Common myeloid progenitor, CD34-positive (primary cell): ENCODE measurements at regions of chr12 and their contacts with region 1.

Region 1: GRCh38 chr12:69254046-69254445 is 14.7 kb downstream of the CPSF6 start:
- DNase-seq: peak; percentile 67 to 84 (median 81)
- H3K4me3 ChIP-seq: no peak overlapping the region
- H3K27ac ChIP-seq: no peak overlapping the region
- H3K4me1 ChIP-seq: peaks cover 0 to 2% (median 0%) of the 10 kb centered on the region in 4 experiments
- H3K27me3 ChIP-seq: no peaks in the 10 kb centered on the region

Region 2: GRCh38 chr12:69243099-69244084 is 10.7 kb before region 1 on chr12:
- CTCF ChIA-PET with region 1: interaction called, 11 read pairs
- POLR2A ChIA-PET with region 1: no interaction called
- DNase-seq: peak in 2 of 3 donors; percentile 48 to 57
- H3K4me3 ChIP-seq: peak overlapping the region in 4 of 7 experiments; percentile 2 to 44 (median 28)
- H3K27ac ChIP-seq: peak overlapping the region in 1 of 2 experiments; percentile 95
- H3K4me1 ChIP-seq: peaks cover 13 to 43% (median 30%) of the 10 kb centered on the region in 4 experiments
- H3K27me3 ChIP-seq: no peaks in the 10 kb centered on the region